Activated naive CD4-positive, alpha-beta T cell treated with anti-CD3 and anti-CD28 coated beads for 36 hours (primary cell): ENCODE measurements at regions of chr9 and their contacts with region 1.

Region 1: DNA sequence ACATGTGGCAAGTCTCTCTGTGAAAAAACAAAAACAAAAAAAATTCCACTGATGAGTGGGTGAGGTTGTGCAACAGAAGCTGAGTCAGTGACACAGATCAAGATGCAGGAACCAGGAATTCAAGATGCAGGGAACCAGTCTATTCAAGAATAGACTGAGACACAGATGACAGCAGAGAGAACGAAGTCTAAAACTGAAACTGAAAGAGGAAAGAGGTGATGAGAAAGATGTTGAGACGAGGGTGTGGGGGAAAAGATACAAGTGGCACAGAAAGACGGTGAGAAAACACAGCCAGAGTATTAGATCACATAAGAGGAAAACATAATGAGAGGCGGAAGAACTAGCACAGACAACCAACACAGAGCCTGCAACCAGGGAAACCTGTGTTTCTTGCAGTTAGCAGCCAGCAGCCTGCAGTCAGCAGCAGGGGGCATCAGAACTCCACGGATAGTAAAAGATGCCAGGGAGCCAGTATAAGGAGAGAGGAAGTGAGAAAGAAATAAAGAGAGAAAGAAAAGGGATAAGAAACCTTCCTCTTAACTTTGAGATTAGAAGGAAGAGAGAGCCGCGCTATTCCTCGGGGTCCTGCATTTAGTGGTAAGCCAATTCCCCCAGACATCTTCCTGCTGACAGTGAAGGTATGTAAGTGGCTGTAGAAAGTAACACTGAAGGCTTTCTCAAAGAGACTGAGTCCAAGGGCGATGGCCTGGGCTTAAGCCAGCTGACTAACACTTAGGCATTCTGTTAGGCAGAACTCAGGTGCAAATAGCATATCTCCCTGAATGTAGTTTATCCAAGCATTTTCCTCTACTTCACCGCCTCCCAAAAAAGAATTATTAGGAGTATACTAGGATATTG is 79.0 kb downstream of the TLR4 start:
- DNase-seq: peak; percentile 72
- H3K4me3 Mint-ChIP-seq: no peak overlapping the region
- H3K27ac Mint-ChIP-seq: no peak overlapping the region
- H3K4me1 Mint-ChIP-seq: peaks cover 4% of the 10 kb centered on the region
- H3K27me3 Mint-ChIP-seq: peaks cover 3% of the 10 kb centered on the region

Region 2: DNA sequence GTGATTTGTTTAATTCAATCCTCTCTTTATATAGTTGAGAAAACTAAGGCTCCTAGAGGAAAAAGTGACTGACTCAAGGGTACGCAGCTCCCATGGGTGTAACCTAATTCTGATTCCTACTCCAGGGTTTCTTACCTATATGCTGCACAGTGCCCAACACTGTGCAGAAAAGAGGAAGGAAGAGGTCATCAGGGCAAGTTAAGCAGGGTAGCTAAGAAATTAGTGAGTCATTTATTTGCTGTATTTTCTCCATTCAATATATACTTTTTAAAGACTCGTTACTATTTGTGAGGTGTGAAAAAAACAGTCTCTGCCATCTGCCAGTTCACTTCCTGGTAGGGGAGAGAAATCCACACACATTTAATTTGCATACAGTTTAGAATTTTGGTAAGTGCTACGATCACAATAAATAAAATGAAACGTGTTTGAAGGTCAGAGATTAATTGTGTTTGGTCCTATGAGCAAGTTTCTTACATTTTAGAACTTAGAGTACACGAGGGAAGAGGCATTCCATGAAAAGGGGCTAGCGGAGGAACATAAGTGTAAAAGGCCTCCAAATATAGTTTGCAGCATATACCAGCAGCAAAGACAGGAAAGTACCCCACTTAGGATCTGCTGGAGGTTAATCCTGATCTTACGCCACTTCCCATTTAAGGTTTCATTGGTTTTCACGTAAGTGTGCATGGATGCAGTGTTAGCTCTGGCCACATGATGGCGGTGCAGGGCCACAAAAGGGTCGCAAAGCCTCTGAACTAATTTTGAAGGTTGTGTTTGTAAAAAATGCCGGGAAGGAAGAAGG is 138.8 kb before region 1 on chr9:
- CTCF ChIA-PET with region 1: no interaction called
- intact Hi-C with region 1: loop called (anchors 2 kb)
- DNase-seq: peak; percentile 72
- H3K4me3 Mint-ChIP-seq: no peak overlapping the region
- H3K27ac Mint-ChIP-seq: no peak overlapping the region
- H3K4me1 Mint-ChIP-seq: peaks cover 4% of the 10 kb centered on the region
- H3K27me3 Mint-ChIP-seq: peaks cover 32% of the 10 kb centered on the region

Region 3: DNA sequence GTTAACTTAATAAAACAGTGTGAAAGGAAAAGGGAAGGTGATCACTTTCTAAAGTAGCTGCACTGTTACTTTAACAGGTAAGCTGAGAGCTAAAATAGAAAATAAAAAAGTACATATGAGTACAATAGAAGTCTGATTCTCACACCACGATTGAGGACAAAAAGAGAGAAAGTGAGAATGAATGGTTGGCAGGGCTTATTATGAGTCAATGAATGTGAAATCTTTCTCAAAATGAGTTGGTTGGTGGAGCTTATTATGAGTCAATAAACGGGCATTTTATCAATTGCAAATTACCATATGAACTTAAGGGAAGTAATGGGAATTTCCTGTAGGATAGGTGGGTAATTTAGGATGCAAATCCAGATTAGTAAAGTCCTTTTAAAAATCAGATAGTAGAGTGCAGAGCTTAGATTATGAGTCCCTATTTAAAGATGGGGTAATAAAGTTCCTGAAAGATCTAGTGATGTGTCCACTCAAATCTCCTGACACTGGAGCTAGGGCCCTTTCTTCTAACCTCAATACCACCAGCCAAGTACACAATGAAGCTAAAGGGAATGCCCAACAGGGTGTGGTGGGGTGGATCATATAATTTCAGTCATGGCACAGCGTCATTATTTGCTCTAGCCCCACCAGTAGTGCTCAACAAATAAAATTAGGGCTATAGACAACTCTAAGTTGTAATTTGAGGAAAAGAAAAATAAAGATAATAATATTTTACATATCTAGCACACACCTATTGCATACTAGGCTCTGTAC is 100.0 kb before region 1 on chr9:
- CTCF ChIA-PET with region 1: no interaction called
- intact Hi-C with region 1: loop called (anchors 2 kb)
- DNase-seq: no peak
- H3K4me3 Mint-ChIP-seq: no peak overlapping the region
- H3K27ac Mint-ChIP-seq: no peak overlapping the region
- H3K4me1 Mint-ChIP-seq: peaks cover 3% of the 10 kb centered on the region
- H3K27me3 Mint-ChIP-seq: peaks cover 22% of the 10 kb centered on the region

Region 4: DNA sequence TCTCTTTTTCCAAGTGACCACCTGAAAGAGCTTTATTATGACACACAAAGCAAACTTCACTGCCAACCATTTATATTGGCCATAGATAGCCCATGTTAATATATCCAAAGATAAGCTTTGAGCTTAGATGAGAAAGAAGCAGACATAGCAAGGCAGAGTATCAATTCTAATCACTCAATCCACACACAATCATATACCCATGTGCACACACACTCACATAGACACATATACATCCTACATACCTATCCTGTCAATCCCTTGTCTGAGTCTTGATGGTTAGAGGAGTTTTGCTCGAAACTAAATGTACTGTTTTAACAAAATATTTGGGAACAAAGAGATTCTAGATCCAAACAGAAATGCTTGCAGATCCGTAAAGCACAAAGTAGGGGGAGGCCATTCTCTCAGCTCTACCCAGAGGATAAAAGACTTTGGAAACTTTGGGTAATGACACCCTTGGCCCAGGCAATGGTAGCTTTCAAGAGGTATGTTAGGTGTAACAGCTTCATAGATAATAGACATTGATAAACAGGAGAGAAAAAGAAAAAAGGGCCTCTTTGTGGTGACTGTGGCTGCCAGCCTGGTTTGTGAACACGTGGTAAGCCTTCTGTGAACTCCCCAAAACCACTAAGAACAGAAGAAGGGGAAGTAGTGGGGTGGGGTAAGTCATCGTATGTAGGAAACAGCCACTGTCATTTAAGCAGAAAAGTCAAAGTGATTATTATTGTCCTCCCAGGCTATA is 42.6 kb after region 1 on chr9:
- CTCF ChIA-PET with region 1: no interaction called
- intact Hi-C with region 1: loop called (anchors 1 kb)
- DNase-seq: peak; percentile 71
- H3K4me3 Mint-ChIP-seq: no peak overlapping the region
- H3K27ac Mint-ChIP-seq: no peak overlapping the region
- H3K4me1 Mint-ChIP-seq: peaks cover 33% of the 10 kb centered on the region
- H3K27me3 Mint-ChIP-seq: peaks cover 40% of the 10 kb centered on the region

Region 5: GRCh38 chr9:117869287-117869686 is 86.1 kb after region 1 on chr9:
- CTCF ChIA-PET with region 1: no interaction called
- intact Hi-C with region 1: no loop called
- DNase-seq: peak; percentile 12
- H3K4me3 Mint-ChIP-seq: no peak overlapping the region
- H3K27ac Mint-ChIP-seq: no peak overlapping the region
- H3K4me1 Mint-ChIP-seq: no peaks in the 10 kb centered on the region
- H3K27me3 Mint-ChIP-seq: peaks cover 13% of the 10 kb centered on the region